ENCODE measurements at regions of chr3 and their contacts with region 1.

Region 1: GRCh38 chr3:158737976-158738615 is 5.8 kb upstream of the RARRES1 start:
- DNase-seq: no peak
- ATAC-seq: no peak
- H3K4me3 ChIP-seq: no peak overlapping the region
- H3K27ac ChIP-seq: no peak overlapping the region
- H3K4me1 ChIP-seq: no peaks in the 10 kb centered on the region
- H3K27me3 ChIP-seq: no peaks in the 10 kb centered on the region
- CTCF ChIP-seq: no peak
- POLR2A ChIP-seq: no peak

Region 2: GRCh38 chr3:158781191-158781590 is 43.1 kb after region 1 on chr3:
- intact Hi-C with region 1: loop called (anchors 5 kb)
- DNase-seq: no peak
- ATAC-seq: no peak
- H3K4me3 ChIP-seq: no peak overlapping the region
- H3K27ac ChIP-seq: no peak overlapping the region
- H3K4me1 ChIP-seq: no peaks in the 10 kb centered on the region
- H3K27me3 ChIP-seq: no peaks in the 10 kb centered on the region
- CTCF ChIP-seq: no peak
- POLR2A ChIP-seq: no peak

Measured in body of pancreas (tissue), 4 donors.